Endothelial cell of umbilical vein (primary cell): ENCODE measurements at regions of chr16 and their contacts with region 1.

Region 1: GRCh38 chr16:4330277-4330874 is 14.5 kb downstream of the GLIS2 start:
- DNase-seq: peak; percentile 58
- H3K4me3 ChIP-seq: no peak overlapping the region
- H3K27ac ChIP-seq: no peak overlapping the region
- H3K4me1 ChIP-seq: peaks cover 23% of the 10 kb centered on the region
- H3K27me3 ChIP-seq: no peaks in the 10 kb centered on the region
- CTCF ChIP-seq: peak; percentile 97 to 99
- POLR2A ChIP-seq: no peak

Region 2: DNA sequence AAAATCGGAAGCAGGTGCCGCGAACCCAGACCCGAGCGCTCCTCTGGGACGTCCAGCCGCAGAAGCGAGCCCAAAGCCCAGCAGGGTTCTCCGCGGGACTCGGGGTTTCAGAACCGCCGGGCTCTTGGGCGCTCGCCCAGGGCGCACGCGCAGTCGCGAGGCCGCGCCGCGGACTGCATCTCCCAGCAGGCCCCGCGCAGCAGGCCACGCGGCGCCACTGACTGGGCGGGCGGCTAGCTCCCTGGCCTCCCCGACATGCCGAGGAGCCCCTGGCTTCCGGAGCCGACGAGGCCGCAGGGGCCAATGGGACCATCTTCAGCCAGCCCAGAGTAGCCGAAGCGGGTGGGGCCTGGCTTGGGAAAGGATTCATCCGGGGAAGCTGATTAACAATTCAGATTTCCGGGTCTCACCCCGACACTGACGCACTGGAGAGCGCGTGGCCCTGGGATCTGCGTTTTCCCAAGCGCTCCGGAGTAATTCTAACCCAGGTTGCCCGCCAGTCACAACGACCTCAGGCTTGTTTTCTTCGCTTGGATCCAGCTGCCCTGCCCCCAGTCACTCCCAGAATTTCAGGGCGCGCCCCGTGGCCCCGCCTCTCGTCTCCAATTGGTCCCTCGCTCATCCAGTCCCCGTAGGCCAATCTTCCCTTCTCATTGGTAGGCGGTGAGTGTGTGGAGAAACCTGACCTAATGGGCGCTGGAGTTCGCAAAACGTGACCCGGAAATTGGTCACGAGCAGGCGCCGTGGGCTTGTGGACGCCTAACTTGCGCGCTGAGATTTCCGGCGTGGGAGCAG is 1047.4 kb before region 1 on chr16 and contains the start of gene ZNF263:
- CTCF ChIA-PET with region 1: no interaction called
- POLR2A ChIA-PET with region 1: no interaction called
- dilution Hi-C with region 1: no loop called
- intact Hi-C with region 1: no loop called
- DNase-seq: peak; percentile 98
- H3K4me3 ChIP-seq: peak within 1 kb of the TSS; percentile 74 to 79 (median 77)
- H3K27ac ChIP-seq: peak within 1 kb of the TSS; percentile 92
- H3K4me1 ChIP-seq: peaks cover 13% of the 10 kb centered on the region
- H3K27me3 ChIP-seq: peaks cover 2 to 6% of the 10 kb centered on the region in 2 experiments
- CTCF ChIP-seq: no peak
- POLR2A ChIP-seq: peak; percentile 75
- total RNA-seq, gene ZNF263: 20.8 and 22.7 TPM in 2 replicates

Region 3: GRCh38 chr16:4176612-4177417 is 153.6 kb before region 1 on chr16:
- CTCF ChIA-PET with region 1: no interaction called
- POLR2A ChIA-PET with region 1: no interaction called
- dilution Hi-C with region 1: no loop called
- intact Hi-C with region 1: no loop called
- DNase-seq: no peak
- H3K4me3 ChIP-seq: no peak overlapping the region
- H3K27ac ChIP-seq: no peak overlapping the region
- H3K4me1 ChIP-seq: no peaks in the 10 kb centered on the region
- H3K27me3 ChIP-seq: no peaks in the 10 kb centered on the region
- CTCF ChIP-seq: no peak
- POLR2A ChIP-seq: no peak

Region 4: GRCh38 chr16:4200000-4200780 is 130.2 kb before region 1 on chr16:
- CTCF ChIA-PET with region 1: interaction called, 64 read pairs
- POLR2A ChIA-PET with region 1: no interaction called
- dilution Hi-C with region 1: no loop called
- intact Hi-C with region 1: loop called (anchors 1 kb)
- DNase-seq: peak; percentile 62
- H3K4me3 ChIP-seq: no peak overlapping the region
- H3K27ac ChIP-seq: no peak overlapping the region
- H3K4me1 ChIP-seq: no peaks in the 10 kb centered on the region
- H3K27me3 ChIP-seq: no peaks in the 10 kb centered on the region
- CTCF ChIP-seq: peak; percentile 46 to 83
- POLR2A ChIP-seq: no peak

Region 5: GRCh38 chr16:4271176-4272066 is 59.0 kb before region 1 on chr16:
- CTCF ChIA-PET with region 1: interaction called, 23 read pairs
- POLR2A ChIA-PET with region 1: no interaction called
- dilution Hi-C with region 1: no loop called
- intact Hi-C with region 1: no loop called
- DNase-seq: peak; percentile 89
- H3K4me3 ChIP-seq: peak overlapping the region; percentile 58 to 89 (median 68)
- H3K27ac ChIP-seq: peak overlapping the region; percentile 51
- H3K4me1 ChIP-seq: peaks cover 15% of the 10 kb centered on the region
- H3K27me3 ChIP-seq: no peaks in the 10 kb centered on the region
- CTCF ChIP-seq: no peak
- POLR2A ChIP-seq: peak; percentile 55

Region 6: GRCh38 chr16:4298761-4299522 is 31.4 kb before region 1 on chr16:
- CTCF ChIA-PET with region 1: interaction called, 13 read pairs
- POLR2A ChIA-PET with region 1: no interaction called
- dilution Hi-C with region 1: no loop called
- intact Hi-C with region 1: no loop called
- DNase-seq: peak; percentile 65
- H3K4me3 ChIP-seq: no peak overlapping the region
- H3K27ac ChIP-seq: peak overlapping the region; percentile 69
- H3K4me1 ChIP-seq: peaks cover 15% of the 10 kb centered on the region
- H3K27me3 ChIP-seq: no peaks in the 10 kb centered on the region
- CTCF ChIP-seq: no peak
- POLR2A ChIP-seq: peak; percentile 53

Region 7: DNA sequence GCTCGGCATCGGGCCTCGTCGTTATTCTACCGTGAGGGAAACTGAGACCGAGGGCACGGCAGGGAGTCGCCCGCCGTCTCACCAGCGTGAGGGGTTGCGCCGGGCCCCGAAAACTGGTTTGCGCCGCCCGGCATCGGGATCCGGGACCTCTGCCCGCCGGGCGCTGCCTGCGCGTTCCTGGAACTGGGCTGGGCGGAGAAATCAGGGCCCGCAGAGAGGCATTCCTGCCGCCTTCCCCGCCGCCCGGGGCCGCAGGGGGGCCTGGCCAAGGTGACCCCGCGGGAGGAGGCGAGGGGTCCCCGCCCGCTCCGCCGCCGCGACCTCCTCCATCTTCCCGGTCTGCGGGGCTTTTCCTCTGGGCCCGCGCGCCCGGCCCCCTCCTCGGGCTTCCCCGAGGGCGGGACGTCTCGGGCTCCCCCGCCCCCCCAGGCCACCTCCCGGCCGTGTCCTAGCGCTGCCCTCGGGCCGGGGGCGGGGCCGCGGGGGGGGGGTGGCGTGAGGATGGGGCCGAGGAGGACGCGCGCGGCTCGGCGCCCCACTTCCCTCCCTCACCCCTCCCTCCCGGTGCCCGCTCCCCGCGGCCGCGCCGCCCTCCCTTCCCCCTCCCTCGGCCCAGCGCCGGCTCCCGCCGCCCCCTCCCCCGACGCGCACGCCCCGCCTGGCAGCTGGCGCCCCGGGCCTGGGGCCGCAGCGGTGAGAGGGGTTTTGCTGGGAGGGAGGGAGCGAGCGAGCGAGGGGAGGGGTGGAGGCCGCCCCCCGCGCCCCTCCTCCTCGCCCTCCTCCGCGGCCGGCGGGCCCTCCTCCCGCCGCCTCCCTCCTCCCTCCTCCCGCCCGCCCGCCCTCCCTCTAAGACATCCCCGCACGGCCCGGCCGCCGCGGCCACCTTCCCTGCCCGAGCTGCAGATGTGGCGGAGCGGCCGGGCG is 14.9 kb before region 1 on chr16 and contains the start of gene GLIS2:
- CTCF ChIA-PET with region 1: interaction called, 135 read pairs
- POLR2A ChIA-PET with region 1: no interaction called
- dilution Hi-C with region 1: no loop called
- intact Hi-C with region 1: loop called (anchors 1 kb)
- DNase-seq: peak; percentile 60
- H3K4me3 ChIP-seq: peak within 1 kb of the TSS; percentile 56 to 77 (median 59)
- H3K27ac ChIP-seq: peak within 1 kb of the TSS; percentile 22
- H3K4me1 ChIP-seq: peaks cover 21% of the 10 kb centered on the region
- H3K27me3 ChIP-seq: no peaks in the 10 kb centered on the region
- CTCF ChIP-seq: no peak
- POLR2A ChIP-seq: no peak
- total RNA-seq, gene GLIS2: 10.1 and 11.3 TPM in 2 replicates